CD4-positive, alpha-beta memory T cell (primary cell): ENCODE measurements at regions of chr11 and their contacts with region 1.

Region 1: GRCh38 chr11:9203691-9204311 is 61.3 kb downstream of the DENND5A start:
- DNase-seq: peak in 3 of 5 donors; percentile 1 to 10 (median 5)
- H3K4me3 ChIP-seq: no peak overlapping the region
- H3K4me3 Mint-ChIP-seq: no peak overlapping the region
- H3K27ac ChIP-seq: no peak overlapping the region
- H3K27ac Mint-ChIP-seq: peak overlapping the region in 3 of 7 donors; percentile 16 to 47 (median 21)
- H3K4me1 ChIP-seq: peaks cover 7% of the 10 kb centered on the region
- H3K4me1 Mint-ChIP-seq: peaks cover 4 to 11% (median 6%) of the 10 kb centered on the region in 4 donors
- H3K27me3 ChIP-seq: no peaks in the 10 kb centered on the region
- H3K27me3 Mint-ChIP-seq: no peaks in the 10 kb centered on the region

Region 2: GRCh38 chr11:9214765-9215164 is 11.0 kb after region 1 on chr11:
- CTCF ChIA-PET with region 1: no interaction called
- POLR2A ChIA-PET with region 1: no interaction called
- intact Hi-C with region 1: no loop called
- DNase-seq: no peak
- H3K4me3 ChIP-seq: no peak overlapping the region
- H3K4me3 Mint-ChIP-seq: peak overlapping the region in 1 of 8 donors; percentile 23
- H3K27ac ChIP-seq: no peak overlapping the region
- H3K27ac Mint-ChIP-seq: peak overlapping the region in 1 of 7 donors; percentile 43
- H3K4me1 ChIP-seq: peaks cover 34% of the 10 kb centered on the region
- H3K4me1 Mint-ChIP-seq: peaks cover 16 to 57% (median 38%) of the 10 kb centered on the region in 4 donors
- H3K27me3 ChIP-seq: no peaks in the 10 kb centered on the region
- H3K27me3 Mint-ChIP-seq: no peaks in the 10 kb centered on the region

Region 3: DNA sequence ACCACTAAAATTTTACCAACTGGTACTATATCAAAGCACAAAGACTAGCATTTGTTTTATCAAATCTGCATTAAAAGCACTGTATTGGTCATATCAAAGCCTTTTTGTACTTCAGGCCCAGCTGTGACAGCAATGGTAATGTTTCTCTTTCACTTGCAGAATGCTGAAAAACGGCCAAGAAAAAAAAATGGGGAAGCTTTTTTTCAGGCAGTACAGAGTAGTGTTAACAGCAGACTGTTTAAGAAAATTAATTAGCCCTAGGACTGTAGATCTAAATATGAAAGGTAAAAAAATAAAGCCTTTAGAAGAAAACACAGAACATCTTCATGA is 28.0 kb after region 1 on chr11:
- CTCF ChIA-PET with region 1: no interaction called
- POLR2A ChIA-PET with region 1: no interaction called
- intact Hi-C with region 1: no loop called
- DNase-seq: peak in 2 of 5 donors; percentile 8 to 26
- H3K4me3 ChIP-seq: no peak overlapping the region
- H3K4me3 Mint-ChIP-seq: peak overlapping the region in 7 of 8 donors; percentile 15 to 80 (median 76)
- H3K27ac ChIP-seq: no peak overlapping the region
- H3K27ac Mint-ChIP-seq: peak overlapping the region in 5 of 7 donors; percentile 6 to 60 (median 46)
- H3K4me1 ChIP-seq: peaks cover 20% of the 10 kb centered on the region
- H3K4me1 Mint-ChIP-seq: peaks cover 27 to 52% (median 37%) of the 10 kb centered on the region in 4 donors
- H3K27me3 ChIP-seq: no peaks in the 10 kb centered on the region
- H3K27me3 Mint-ChIP-seq: no peaks in the 10 kb centered on the region

Region 4: DNA sequence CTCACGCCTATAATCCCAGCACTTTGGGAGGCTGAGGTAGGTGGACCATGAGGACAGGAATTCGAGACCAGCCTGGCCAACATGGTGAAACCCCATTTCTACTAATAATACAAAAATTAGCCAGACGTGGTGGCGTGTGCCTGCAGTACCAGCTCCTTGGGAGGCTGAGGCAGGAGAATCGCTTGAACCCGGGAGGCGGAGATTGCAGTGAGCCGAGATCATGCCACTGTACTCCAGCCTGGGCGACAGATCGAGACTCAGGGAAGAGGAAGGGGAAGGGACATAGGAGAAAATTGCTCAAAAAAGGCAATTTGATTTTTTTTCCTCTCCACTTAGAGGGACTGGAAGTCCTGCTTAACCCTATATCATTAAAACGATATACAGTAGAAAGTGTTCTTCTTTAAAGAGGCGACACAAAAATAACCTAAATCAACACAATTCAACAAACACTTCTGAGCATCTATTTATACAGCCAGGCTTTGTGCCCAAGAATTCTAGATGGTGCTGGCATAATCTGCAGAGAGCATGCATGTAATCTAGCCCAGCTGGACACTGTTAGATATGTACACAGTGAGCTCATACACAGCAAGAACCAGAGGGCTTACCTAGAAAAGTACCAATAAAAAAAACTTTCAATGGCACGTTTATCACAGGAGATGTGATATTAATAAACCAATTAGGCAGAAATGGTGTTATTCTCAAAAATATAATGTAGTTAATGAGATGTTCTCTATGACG is 82.2 kb after region 1 on chr11:
- CTCF ChIA-PET with region 1: no interaction called
- POLR2A ChIA-PET with region 1: interaction called, 3 read pairs
- intact Hi-C with region 1: loop called (anchors 5 kb)
- DNase-seq: no peak
- H3K4me3 ChIP-seq: no peak overlapping the region
- H3K4me3 Mint-ChIP-seq: no peak overlapping the region
- H3K27ac ChIP-seq: no peak overlapping the region
- H3K27ac Mint-ChIP-seq: peak overlapping the region in 1 of 7 donors; percentile 4
- H3K4me1 ChIP-seq: peaks cover 5% of the 10 kb centered on the region
- H3K4me1 Mint-ChIP-seq: peaks cover 2 to 6% (median 4%) of the 10 kb centered on the region in 4 donors
- H3K27me3 ChIP-seq: no peaks in the 10 kb centered on the region
- H3K27me3 Mint-ChIP-seq: no peaks in the 10 kb centered on the region

Region 5: DNA sequence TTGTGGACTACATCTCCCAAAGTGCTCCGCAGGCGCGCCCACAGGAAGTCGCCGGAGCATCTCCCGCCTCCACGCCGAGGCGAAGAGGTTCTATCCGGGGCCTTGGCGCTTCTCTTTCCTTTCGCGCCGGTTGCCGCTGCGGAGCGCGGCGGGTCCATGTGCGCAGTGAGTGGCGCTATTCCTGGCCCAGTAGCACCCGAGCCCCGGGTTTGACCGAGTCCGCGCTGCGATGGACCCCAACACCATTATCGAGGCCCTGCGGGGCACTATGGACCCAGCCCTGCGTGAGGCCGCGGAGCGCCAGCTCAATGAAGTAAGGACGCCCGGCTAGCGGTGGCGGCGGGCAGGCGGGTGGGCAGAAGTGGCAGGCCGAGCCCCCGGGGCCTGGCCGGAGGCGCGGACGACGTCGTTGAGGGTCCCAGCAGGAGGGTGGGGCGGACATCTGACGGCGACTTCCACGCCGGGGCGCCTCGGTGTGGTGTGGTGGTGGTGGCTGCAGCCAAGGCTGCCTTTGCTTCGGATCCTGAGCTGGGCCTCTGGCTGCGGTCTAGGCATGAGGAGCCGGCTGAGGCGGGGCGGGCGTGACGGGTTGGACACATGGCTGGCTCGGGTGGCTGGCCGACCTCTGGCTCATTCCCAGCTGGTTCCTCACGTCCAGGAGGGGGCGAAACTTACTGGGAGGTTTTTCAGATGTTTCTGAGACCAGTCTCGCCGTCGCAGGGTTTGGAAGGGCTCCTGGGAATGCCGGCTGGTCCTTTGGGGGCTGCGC is 180.9 kb after region 1 on chr11 and contains the start of gene IPO7:
- CTCF ChIA-PET with region 1: no interaction called
- POLR2A ChIA-PET with region 1: no interaction called
- intact Hi-C with region 1: no loop called
- DNase-seq: peak; percentile 84 to 89 (median 86)
- H3K4me3 ChIP-seq: peak within 1 kb of the TSS; percentile 92 to 97
- H3K4me3 Mint-ChIP-seq: peak within 1 kb of the TSS; percentile 92 to 98 (median 94)
- H3K27ac ChIP-seq: peak within 1 kb of the TSS; percentile 86
- H3K27ac Mint-ChIP-seq: peak within 1 kb of the TSS; percentile 92 to 96 (median 94)
- H3K4me1 ChIP-seq: peaks cover 29% of the 10 kb centered on the region
- H3K4me1 Mint-ChIP-seq: peaks cover 23 to 43% (median 34%) of the 10 kb centered on the region in 4 donors
- H3K27me3 ChIP-seq: no peaks in the 10 kb centered on the region
- H3K27me3 Mint-ChIP-seq: no peaks in the 10 kb centered on the region
- total RNA-seq, gene IPO7: 63.4 to 67.0 TPM